CD8-positive, alpha-beta T cell (primary cell): ENCODE measurements at regions of chr15 and their contacts with region 1.

Region 1: DNA sequence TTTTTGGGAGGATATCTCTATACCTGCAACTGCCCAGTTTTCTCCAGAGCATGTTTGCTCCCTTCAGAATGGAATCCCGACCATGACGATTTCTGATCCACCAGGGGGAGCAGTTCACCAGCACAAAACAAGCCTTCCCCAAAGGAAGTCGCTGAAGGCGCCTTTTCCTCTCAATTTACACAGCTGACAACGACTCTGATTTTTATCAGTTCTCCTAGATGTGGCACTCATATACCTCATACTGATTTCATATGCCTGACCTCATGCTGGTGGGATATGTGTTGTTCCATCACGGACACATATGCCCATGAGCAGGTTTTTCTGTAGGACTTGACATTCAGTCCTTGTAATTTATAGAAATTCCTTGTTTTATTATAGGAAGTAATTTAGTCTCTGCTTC is 1028.2 kb downstream of the MCTP2 start:
- DNase-seq: peak; percentile 9 to 72 (median 51)
- ATAC-seq: no peak
- H3K4me3 ChIP-seq: no peak overlapping the region
- H3K4me3 Mint-ChIP-seq: no peak overlapping the region
- H3K27ac ChIP-seq: no peak overlapping the region
- H3K27ac Mint-ChIP-seq: no peak overlapping the region
- H3K4me1 ChIP-seq: no peaks in the 10 kb centered on the region
- H3K4me1 Mint-ChIP-seq: no peaks in the 10 kb centered on the region
- H3K27me3 ChIP-seq: no peaks in the 10 kb centered on the region
- H3K27me3 Mint-ChIP-seq: peaks cover 20% of the 10 kb centered on the region
- CTCF ChIP-seq: peak; percentile 80

Region 2: DNA sequence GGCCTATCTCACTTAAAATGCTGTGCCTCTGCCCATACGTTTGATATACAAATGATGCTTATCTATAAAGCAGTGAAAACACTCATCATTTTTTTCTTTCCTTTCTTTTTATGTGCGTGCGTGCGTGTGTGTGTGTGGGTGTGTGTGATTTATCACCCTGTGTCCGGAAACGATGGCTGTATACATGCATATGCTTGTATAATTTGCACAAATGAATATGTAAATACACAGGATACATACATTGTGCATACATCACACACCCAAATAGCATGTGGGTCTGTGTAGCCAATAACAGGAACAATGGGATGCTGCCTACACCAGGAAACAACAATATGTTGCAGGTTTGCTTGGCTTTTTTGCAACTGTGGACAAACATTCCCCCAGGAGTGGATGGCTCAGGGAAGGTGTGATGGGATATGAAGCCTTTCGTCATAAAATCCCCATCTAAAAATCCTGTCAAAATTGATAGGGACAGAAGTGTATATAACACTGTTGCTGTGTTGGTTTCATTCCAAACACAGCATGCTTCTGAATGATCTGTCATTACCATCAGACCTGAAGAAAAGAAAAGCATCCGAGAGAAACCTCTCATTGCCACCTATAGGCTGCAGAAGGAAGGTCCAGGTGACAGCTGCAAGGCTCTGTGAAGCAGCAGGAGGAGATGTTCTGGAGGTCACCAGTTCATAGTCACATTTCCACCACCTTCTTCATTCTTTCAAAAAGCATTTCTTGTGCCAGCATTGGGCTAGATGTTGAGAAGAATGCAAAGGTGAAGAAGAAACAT is 567.1 kb after region 1 on chr15:
- CTCF ChIA-PET with region 1: interaction called, 4 read pairs
- POLR2A ChIA-PET with region 1: no interaction called
- intact Hi-C with region 1: loop called in 1 of 2 experiments (anchors 10 kb)
- DNase-seq: peak in 2 of 9 experiments; percentile 10 to 34
- ATAC-seq: no peak
- H3K4me3 ChIP-seq: no peak overlapping the region
- H3K4me3 Mint-ChIP-seq: no peak overlapping the region
- H3K27ac ChIP-seq: no peak overlapping the region
- H3K27ac Mint-ChIP-seq: no peak overlapping the region
- H3K4me1 ChIP-seq: no peaks in the 10 kb centered on the region
- H3K4me1 Mint-ChIP-seq: no peaks in the 10 kb centered on the region
- H3K27me3 ChIP-seq: no peaks in the 10 kb centered on the region
- H3K27me3 Mint-ChIP-seq: no peaks in the 10 kb centered on the region
- CTCF ChIP-seq: no peak

Region 3: GRCh38 chr15:96345560-96346399 is 1086.3 kb after region 1 on chr15:
- CTCF ChIA-PET with region 1: interaction called, 5 read pairs
- POLR2A ChIA-PET with region 1: no interaction called
- intact Hi-C with region 1: loop called in 1 of 2 experiments (anchors 5 kb)
- DNase-seq: peak in 2 of 9 experiments; percentile 25 to 41
- ATAC-seq: no peak
- H3K4me3 ChIP-seq: no peak overlapping the region
- H3K4me3 Mint-ChIP-seq: no peak overlapping the region
- H3K27ac ChIP-seq: no peak overlapping the region
- H3K27ac Mint-ChIP-seq: no peak overlapping the region
- H3K4me1 ChIP-seq: no peaks in the 10 kb centered on the region
- H3K4me1 Mint-ChIP-seq: peaks cover 3% of the 10 kb centered on the region
- H3K27me3 ChIP-seq: peaks cover 39 to 46% of the 10 kb centered on the region in 2 experiments
- H3K27me3 Mint-ChIP-seq: peaks cover 83% of the 10 kb centered on the region
- CTCF ChIP-seq: no peak

Region 4: DNA sequence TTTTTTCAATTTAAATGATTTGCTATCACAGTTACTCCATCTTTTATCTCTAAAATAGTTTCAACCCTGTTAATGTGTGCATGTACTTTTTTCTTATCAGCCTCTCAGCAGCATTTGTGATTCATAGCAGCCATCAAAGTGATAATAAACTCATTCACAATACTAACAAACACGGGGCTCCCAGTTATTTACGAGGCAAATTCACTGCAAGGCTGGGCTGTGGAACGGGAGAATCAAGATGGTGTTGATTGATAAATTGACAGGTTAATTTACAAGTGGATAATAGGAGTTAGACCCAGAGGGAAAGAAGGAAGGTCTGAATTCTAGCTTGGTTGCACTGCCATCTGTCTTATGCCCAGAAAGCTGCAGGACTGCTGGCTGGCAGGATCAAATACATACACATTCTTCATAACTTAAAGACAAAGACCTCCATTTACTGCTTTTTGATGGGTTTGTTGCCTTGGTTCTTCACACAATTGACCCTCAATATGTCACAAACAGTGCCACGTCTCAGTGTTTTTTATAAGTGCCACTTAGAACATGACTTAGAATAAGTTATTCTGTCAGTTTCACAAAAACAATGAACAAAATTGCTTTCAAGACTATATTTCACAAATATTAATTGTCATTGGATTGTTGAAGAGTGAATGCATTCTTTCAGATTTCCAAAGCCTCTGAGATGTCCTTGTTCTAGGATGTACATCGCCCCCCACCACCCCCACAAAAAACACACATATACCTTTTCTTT is 1633.8 kb after region 1 on chr15:
- CTCF ChIA-PET with region 1: no interaction called
- POLR2A ChIA-PET with region 1: no interaction called
- intact Hi-C with region 1: loop called in 1 of 2 experiments (anchors 10 kb)
- DNase-seq: peak in 2 of 9 experiments; percentile 4 to 7
- ATAC-seq: no peak
- H3K4me3 ChIP-seq: no peak overlapping the region
- H3K4me3 Mint-ChIP-seq: no peak overlapping the region
- H3K27ac ChIP-seq: no peak overlapping the region
- H3K27ac Mint-ChIP-seq: no peak overlapping the region
- H3K4me1 ChIP-seq: peaks cover 4% of the 10 kb centered on the region
- H3K4me1 Mint-ChIP-seq: peaks cover 15% of the 10 kb centered on the region
- H3K27me3 ChIP-seq: no peaks in the 10 kb centered on the region
- H3K27me3 Mint-ChIP-seq: no peaks in the 10 kb centered on the region
- CTCF ChIP-seq: no peak

Region 5: GRCh38 chr15:97234851-97235610 is 1975.5 kb after region 1 on chr15:
- CTCF ChIA-PET with region 1: interaction called, 12 read pairs
- POLR2A ChIA-PET with region 1: no interaction called
- intact Hi-C with region 1: loop called in 1 of 2 experiments (anchors 1 kb)
- DNase-seq: peak in 4 of 9 experiments; percentile 9 to 27 (median 16)
- ATAC-seq: no peak
- H3K4me3 ChIP-seq: no peak overlapping the region
- H3K4me3 Mint-ChIP-seq: no peak overlapping the region
- H3K27ac ChIP-seq: no peak overlapping the region
- H3K27ac Mint-ChIP-seq: no peak overlapping the region
- H3K4me1 ChIP-seq: no peaks in the 10 kb centered on the region
- H3K4me1 Mint-ChIP-seq: no peaks in the 10 kb centered on the region
- H3K27me3 ChIP-seq: no peaks in the 10 kb centered on the region
- H3K27me3 Mint-ChIP-seq: peaks cover 3% of the 10 kb centered on the region
- CTCF ChIP-seq: peak; percentile 57